A673 (cell line): ENCODE measurements at regions of chr7 and their contacts with region 1.

Region 1: GRCh38 chr7:29370531-29371314 is 176.1 kb downstream of the CHN2 start:
- DNase-seq: peak; percentile 78
- H3K4me3 ChIP-seq: no peak overlapping the region
- H3K27ac ChIP-seq: peak overlapping the region; percentile 98
- H3K4me1 ChIP-seq: peaks cover 69% of the 10 kb centered on the region
- H3K27me3 ChIP-seq: no peaks in the 10 kb centered on the region
- CTCF ChIP-seq: no peak

Region 2: GRCh38 chr7:28800150-28800549 is 570.6 kb before region 1 on chr7:
- CTCF ChIA-PET with region 1: no interaction called
- POLR2A ChIA-PET with region 1: no interaction called
- intact Hi-C with region 1: no loop called
- DNase-seq: no peak
- H3K4me3 ChIP-seq: no peak overlapping the region
- H3K27ac ChIP-seq: no peak overlapping the region
- H3K4me1 ChIP-seq: no peaks in the 10 kb centered on the region
- H3K27me3 ChIP-seq: no peaks in the 10 kb centered on the region
- CTCF ChIP-seq: no peak

Region 3: GRCh38 chr7:29177963-29178600 is 192.6 kb before region 1 on chr7:
- CTCF ChIA-PET with region 1: interaction called, 12 read pairs
- POLR2A ChIA-PET with region 1: no interaction called
- intact Hi-C with region 1: no loop called
- DNase-seq: no peak
- H3K4me3 ChIP-seq: no peak overlapping the region
- H3K27ac ChIP-seq: no peak overlapping the region
- H3K4me1 ChIP-seq: peaks cover 4% of the 10 kb centered on the region
- H3K27me3 ChIP-seq: no peaks in the 10 kb centered on the region
- CTCF ChIP-seq: no peak

Region 4: GRCh38 chr7:29189743-29190201 is 181.0 kb before region 1 on chr7:
- CTCF ChIA-PET with region 1: interaction called, 6 read pairs
- POLR2A ChIA-PET with region 1: no interaction called
- intact Hi-C with region 1: loop called (anchors 1 kb)
- DNase-seq: peak; percentile 89
- H3K4me3 ChIP-seq: peak overlapping the region; percentile 23
- H3K27ac ChIP-seq: peak overlapping the region; percentile 90
- H3K4me1 ChIP-seq: peaks cover 55% of the 10 kb centered on the region
- H3K27me3 ChIP-seq: no peaks in the 10 kb centered on the region
- CTCF ChIP-seq: peak; percentile 98

Region 5: DNA sequence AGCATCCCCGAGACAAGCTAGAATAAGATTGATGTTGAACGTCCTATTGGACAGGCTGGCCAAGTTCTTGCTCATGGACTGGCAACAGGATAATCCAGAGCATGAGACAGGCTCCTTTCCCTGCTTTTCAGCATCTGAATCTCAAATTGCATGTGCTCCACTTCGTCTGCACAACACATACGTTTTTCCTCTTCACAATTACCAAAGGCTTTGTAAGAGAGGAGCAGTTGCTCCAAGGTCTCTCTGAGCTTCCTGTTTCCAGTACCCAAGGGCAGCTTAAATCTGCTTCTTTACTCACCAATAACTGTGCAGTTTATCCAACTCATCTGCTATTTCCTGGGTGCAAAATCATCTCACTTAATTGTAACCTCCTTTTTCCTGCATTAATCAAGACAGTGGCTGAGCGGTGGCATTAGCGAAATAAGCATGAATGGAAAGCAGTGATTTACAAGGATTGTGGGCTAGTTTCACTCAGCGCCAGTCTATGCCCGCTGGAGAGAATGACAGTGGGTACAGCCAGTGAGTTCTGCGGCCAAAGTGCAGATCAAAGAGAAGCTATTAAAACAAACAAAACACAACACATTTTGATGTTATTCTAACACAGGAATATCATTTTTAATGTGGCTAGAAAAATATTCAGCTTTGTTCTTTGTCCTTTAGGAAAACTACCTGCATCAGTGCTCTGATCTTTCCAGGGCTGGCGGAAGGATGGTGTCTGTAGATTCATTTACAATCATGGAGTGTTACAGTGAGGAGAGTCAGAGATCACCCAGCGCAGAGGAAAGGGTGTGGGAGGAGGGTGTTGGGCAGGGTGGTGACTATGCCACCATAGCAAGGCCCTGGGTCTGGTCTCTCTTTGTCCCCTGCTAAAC is 96.3 kb before region 1 on chr7:
- CTCF ChIA-PET with region 1: no interaction called
- POLR2A ChIA-PET with region 1: no interaction called
- intact Hi-C with region 1: loop called (anchors 10 kb)
- DNase-seq: peak; percentile 85
- H3K4me3 ChIP-seq: no peak overlapping the region
- H3K27ac ChIP-seq: peak overlapping the region; percentile 72
- H3K4me1 ChIP-seq: peaks cover 96% of the 10 kb centered on the region
- H3K27me3 ChIP-seq: no peaks in the 10 kb centered on the region
- CTCF ChIP-seq: no peak

Region 6: GRCh38 chr7:29337546-29338116 is 33.1 kb before region 1 on chr7:
- CTCF ChIA-PET with region 1: no interaction called
- POLR2A ChIA-PET with region 1: no interaction called
- intact Hi-C with region 1: loop called (anchors 5 kb)
- DNase-seq: no peak
- H3K4me3 ChIP-seq: peak overlapping the region; percentile 7
- H3K27ac ChIP-seq: peak overlapping the region; percentile 79
- H3K4me1 ChIP-seq: peaks cover 58% of the 10 kb centered on the region
- H3K27me3 ChIP-seq: no peaks in the 10 kb centered on the region
- CTCF ChIP-seq: no peak

Region 7: GRCh38 chr7:29396563-29396962 is 25.8 kb after region 1 on chr7:
- CTCF ChIA-PET with region 1: no interaction called
- POLR2A ChIA-PET with region 1: interaction called, 15 read pairs
- intact Hi-C with region 1: no loop called
- DNase-seq: no peak
- H3K4me3 ChIP-seq: no peak overlapping the region
- H3K27ac ChIP-seq: no peak overlapping the region
- H3K4me1 ChIP-seq: peaks cover 29% of the 10 kb centered on the region
- H3K27me3 ChIP-seq: no peaks in the 10 kb centered on the region
- CTCF ChIP-seq: no peak

Region 8: DNA sequence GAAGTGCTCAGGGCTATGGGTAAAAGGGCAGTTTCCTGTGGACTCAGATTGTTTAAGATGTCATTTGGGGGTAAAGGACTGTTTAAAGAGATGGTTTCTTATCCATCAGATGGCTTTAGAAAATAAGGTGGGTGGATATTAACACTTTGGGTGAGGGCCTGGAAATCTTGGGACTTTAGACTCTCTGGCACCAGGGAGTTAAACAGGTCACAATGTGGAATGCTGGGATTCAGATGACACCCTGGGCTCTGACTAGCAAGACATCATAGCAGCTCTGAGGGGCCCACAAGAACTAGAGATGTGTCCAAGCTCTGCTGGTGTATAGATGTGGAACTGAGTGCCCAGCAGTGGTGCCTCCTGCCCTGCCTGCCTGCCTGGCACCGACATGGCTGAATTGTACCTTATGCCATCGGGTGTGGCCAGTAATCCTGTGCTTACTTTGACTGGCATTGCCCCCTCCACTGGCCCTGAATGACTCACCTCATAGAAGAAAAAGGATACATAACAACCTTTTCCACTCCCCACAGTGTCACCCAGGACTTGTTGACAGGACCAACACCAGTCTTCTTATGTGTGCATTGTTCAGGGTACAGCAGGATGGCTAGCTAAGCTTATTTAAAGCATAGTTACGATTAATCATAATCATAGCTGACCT is 92.9 kb after region 1 on chr7:
- CTCF ChIA-PET with region 1: no interaction called
- POLR2A ChIA-PET with region 1: no interaction called
- intact Hi-C with region 1: no loop called
- DNase-seq: no peak
- H3K4me3 ChIP-seq: no peak overlapping the region
- H3K27ac ChIP-seq: no peak overlapping the region
- H3K4me1 ChIP-seq: no peaks in the 10 kb centered on the region
- H3K27me3 ChIP-seq: no peaks in the 10 kb centered on the region
- CTCF ChIP-seq: no peak

Region 9: DNA sequence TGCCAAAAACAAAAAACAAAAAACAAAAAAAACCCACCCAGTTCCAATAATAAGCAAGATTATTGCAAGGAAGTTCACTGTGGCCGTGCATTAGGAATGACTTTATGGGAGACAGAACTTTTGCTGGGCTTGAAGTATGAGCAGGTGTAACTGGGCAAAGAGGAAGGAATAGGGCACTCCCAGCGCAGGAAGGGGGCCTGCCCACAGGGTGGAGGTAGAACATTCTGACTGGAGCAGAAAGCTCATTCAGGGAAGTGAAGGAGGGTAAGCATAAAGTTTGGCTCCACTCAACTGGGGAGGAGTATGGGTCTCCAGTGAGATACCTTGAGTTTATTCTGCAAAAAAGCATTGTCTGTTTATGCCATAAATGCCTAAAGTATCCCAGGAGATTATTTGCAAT is 393.5 kb after region 1 on chr7:
- CTCF ChIA-PET with region 1: no interaction called
- POLR2A ChIA-PET with region 1: no interaction called
- intact Hi-C with region 1: no loop called
- DNase-seq: peak; percentile 7
- H3K4me3 ChIP-seq: no peak overlapping the region
- H3K27ac ChIP-seq: no peak overlapping the region
- H3K4me1 ChIP-seq: no peaks in the 10 kb centered on the region
- H3K27me3 ChIP-seq: no peaks in the 10 kb centered on the region
- CTCF ChIP-seq: peak; percentile 50